ENCODE measurements at regions of chrX and their contacts with region 1.

Region 1: DNA sequence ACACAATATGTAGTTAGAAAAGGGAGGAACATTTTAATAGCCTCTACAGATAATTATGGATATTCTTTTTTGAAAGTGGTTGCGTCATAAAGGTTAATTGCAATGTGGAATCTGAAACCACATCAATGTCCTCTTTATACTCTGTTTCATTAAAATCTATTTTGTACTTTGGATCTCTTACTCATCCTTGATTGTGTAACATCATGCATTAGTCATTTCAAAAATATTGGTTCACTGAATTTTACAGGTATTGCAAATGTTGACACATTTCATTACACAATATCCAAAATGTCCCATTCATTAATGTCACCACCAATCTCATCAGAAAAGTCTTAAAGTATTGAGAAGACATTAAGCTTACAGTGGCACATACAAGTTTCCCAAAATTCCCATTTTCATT is 62.7 kb upstream of the USP9X start:
- DNase-seq: no peak
- ATAC-seq: no peak
- H3K4me3 ChIP-seq: no peak overlapping the region
- H3K4me3 Mint-ChIP-seq: no peak overlapping the region
- H3K27ac ChIP-seq: no peak overlapping the region
- H3K27ac Mint-ChIP-seq: no peak overlapping the region
- H3K4me1 ChIP-seq: no peaks in the 10 kb centered on the region
- H3K4me1 Mint-ChIP-seq: no peaks in the 10 kb centered on the region
- H3K27me3 ChIP-seq: no peaks in the 10 kb centered on the region
- H3K27me3 Mint-ChIP-seq: peaks cover 0 to 19% of the 10 kb centered on the region in 2 donors

Region 2: GRCh38 chrX:41010188-41010846 is 12.3 kb before region 1 on chrX:
- CTCF ChIA-PET with region 1: no interaction called
- POLR2A ChIA-PET with region 1: interaction called in 1 of 2 experiments, 11 read pairs
- DNase-seq: peak; percentile 12 to 68 (median 41)
- ATAC-seq: peak; percentile 83 to 93 (median 92)
- H3K4me3 ChIP-seq: peak overlapping the region; percentile 33 to 43
- H3K4me3 Mint-ChIP-seq: peak overlapping the region; percentile 62 to 67 (median 63)
- H3K27ac ChIP-seq: peak overlapping the region; percentile 79
- H3K27ac Mint-ChIP-seq: peak overlapping the region; percentile 87 to 89
- H3K4me1 ChIP-seq: peaks cover 2 to 15% of the 10 kb centered on the region in 2 experiments
- H3K4me1 Mint-ChIP-seq: peaks cover 13 to 26% (median 18%) of the 10 kb centered on the region in 3 donors
- H3K27me3 ChIP-seq: no peaks in the 10 kb centered on the region
- H3K27me3 Mint-ChIP-seq: peaks cover 0 to 39% of the 10 kb centered on the region in 2 donors

Region 3: DNA sequence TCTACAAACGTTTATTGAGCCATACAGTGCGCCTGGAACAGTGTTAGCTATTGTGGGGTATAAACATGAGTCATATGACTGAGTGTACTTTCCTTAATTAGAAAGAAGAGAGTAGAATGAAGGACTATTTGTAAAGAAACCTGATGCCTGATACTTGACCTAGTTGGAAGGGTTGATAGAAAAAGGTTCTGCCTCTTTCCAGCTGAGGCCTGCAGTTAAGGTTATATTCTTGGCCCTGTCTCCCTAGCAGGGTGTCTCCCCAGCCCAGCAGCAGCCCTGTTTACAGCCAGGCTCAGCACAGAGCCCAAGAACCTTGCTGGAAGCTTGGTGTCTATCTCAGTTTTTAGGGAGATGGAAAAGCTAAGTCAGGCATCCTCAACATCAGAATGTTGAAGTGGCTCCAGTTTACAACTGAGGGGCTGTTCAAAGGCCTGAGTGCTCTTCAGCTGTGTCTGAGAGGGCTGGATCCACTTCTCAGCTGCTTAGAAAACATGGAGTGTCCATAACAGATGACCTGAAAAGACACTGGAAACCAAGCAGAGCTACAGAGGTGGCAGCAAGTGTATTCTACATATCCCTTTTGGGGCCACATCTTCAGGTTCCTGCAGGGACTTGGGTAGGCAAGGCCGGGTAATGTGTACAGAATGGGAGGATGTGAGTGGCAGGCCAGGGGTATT is 446.2 kb after region 1 on chrX:
- CTCF ChIA-PET with region 1: no interaction called
- POLR2A ChIA-PET with region 1: no interaction called
- DNase-seq: no peak
- ATAC-seq: no peak
- H3K4me3 ChIP-seq: no peak overlapping the region
- H3K4me3 Mint-ChIP-seq: no peak overlapping the region
- H3K27ac ChIP-seq: no peak overlapping the region
- H3K27ac Mint-ChIP-seq: no peak overlapping the region
- H3K4me1 ChIP-seq: no peaks in the 10 kb centered on the region
- H3K4me1 Mint-ChIP-seq: no peaks in the 10 kb centered on the region
- H3K27me3 ChIP-seq: no peaks in the 10 kb centered on the region
- H3K27me3 Mint-ChIP-seq: peaks cover 0 to 10% of the 10 kb centered on the region in 2 donors

Measured in T-cell (primary cell).